OCI-LY7 (cell line): ENCODE measurements at regions of chr16 and their contacts with region 1.

Region 1: GRCh38 chr16:3503523-3503922 is 2.7 kb downstream of the CLUAP1 start:
- DNase-seq: peak; percentile 21
- H3K4me3 ChIP-seq: no peak overlapping the region
- H3K27ac ChIP-seq: no peak overlapping the region
- H3K4me1 ChIP-seq: peaks cover 16% of the 10 kb centered on the region
- CTCF ChIP-seq: no peak

Region 2: DNA sequence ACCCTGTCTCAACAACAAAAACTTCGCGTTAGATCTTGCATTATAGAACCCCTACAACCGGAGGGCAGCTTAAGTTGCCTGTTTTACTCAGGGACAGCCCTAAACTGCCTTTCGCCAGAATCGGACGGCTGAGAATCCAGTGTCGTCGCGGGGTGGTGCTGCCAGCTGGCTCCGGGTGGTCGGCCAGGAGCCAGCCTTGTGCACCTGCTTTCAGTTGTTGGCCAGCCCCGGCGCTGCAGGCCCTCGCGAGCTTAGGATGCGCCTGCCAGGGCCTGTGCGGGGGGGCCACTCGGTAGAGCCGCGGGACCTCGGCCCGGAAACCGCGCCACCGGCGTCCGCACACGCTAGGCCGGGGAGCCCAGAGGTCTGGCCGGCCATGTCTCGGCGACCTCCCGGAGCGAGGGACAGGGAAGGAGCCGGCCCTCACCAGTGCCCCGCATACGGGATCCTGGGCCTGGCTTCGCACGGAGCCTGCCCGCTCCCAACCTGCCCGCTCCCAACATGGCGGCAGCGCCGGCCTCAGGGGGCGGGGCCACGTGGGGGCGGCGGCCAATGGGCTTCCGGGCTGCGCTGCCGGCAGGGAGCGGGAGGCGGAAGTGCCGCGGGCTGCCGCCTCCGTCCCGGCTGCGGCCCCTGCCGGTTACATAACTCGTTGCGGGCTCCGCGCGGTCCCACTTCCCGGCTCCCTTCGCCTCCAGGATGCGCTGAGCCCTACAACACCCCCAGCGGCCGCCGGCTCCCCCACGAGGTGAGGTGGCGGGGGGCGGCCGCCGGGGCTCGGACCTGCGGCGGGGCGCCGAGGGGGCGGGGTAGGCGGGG is 45.9 kb before region 1 on chr16:
- CTCF ChIA-PET with region 1: no interaction called
- POLR2A ChIA-PET with region 1: no interaction called
- intact Hi-C with region 1: loop called (anchors 2 kb)
- DNase-seq: peak; percentile 94
- H3K4me3 ChIP-seq: peak overlapping the region; percentile 98
- H3K27ac ChIP-seq: peak overlapping the region; percentile 53
- H3K4me1 ChIP-seq: peaks cover 43% of the 10 kb centered on the region
- CTCF ChIP-seq: peak; percentile 60